Activated CD8-positive, alpha-beta T cell treated with anti-CD3 and anti-CD28 coated beads for 36 hours (primary cell): ENCODE measurements at regions of chr10 and their contacts with region 1.

Region 1: GRCh38 chr10:118720685-118721538 is 33.9 kb downstream of the CACUL1 start:
- DNase-seq: peak; percentile 75
- ATAC-seq: peak; percentile 42
- H3K4me3 Mint-ChIP-seq: no peak overlapping the region
- H3K27ac Mint-ChIP-seq: no peak overlapping the region
- H3K4me1 Mint-ChIP-seq: peaks cover 8% of the 10 kb centered on the region
- H3K27me3 Mint-ChIP-seq: no peaks in the 10 kb centered on the region
- CTCF ChIP-seq: peak; percentile 88

Region 2: GRCh38 chr10:118692872-118693271 is 28.0 kb before region 1 on chr10:
- CTCF ChIA-PET with region 1: interaction called, 16 read pairs
- POLR2A ChIA-PET with region 1: no interaction called
- intact Hi-C with region 1: no loop called
- DNase-seq: no peak
- ATAC-seq: no peak
- H3K4me3 Mint-ChIP-seq: no peak overlapping the region
- H3K27ac Mint-ChIP-seq: no peak overlapping the region
- H3K4me1 Mint-ChIP-seq: peaks cover 20% of the 10 kb centered on the region
- H3K27me3 Mint-ChIP-seq: no peaks in the 10 kb centered on the region
- CTCF ChIP-seq: no peak

Region 3: DNA sequence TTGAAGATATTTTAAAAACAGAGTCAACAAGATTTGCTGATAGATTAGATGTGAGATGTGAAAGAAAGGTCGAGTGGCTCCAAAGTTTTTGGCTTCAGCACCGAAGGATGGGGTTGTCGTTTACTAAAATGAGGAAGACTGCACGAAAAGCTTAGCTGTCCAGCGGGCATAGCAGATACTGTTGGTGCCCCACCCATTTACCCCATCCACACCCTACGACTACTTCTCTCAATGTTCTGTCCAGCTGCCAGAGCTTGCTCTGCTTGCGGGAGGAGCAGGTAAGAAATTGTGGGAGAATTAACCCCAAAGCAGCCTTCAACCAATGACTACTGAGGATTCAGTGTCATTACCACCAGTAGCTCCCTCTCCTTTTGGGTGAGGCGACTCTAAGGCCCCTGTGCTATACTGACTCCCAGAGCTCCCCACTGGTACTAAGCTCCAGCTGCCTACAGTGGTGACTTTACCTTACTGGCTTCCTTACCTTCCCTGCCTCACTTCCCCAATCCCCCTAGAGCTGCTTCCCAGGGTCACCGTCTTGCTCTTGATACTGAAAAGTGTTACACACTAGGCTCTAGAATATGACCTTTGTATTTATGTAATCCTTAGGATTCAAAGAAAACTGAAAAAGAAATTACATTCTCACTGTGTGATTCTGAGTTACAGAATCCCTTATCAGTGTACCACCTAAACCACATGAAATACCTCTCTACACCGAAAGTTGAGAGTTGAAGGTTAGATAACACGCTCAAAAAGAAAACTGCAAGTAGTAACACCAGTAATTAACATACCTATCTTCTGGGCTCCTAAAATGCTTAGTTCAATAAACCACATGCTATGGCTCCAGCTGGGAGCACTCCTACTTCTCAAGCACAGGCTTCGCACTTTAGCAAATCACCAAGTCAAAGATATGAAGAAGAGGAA is 11.6 kb after region 1 on chr10:
- CTCF ChIA-PET with region 1: interaction called, 14 read pairs
- POLR2A ChIA-PET with region 1: interaction called, 3 read pairs
- intact Hi-C with region 1: no loop called
- DNase-seq: no peak
- ATAC-seq: peak; percentile 74
- H3K4me3 Mint-ChIP-seq: peak overlapping the region; percentile 10
- H3K27ac Mint-ChIP-seq: peak overlapping the region; percentile 14
- H3K4me1 Mint-ChIP-seq: peaks cover 75% of the 10 kb centered on the region
- H3K27me3 Mint-ChIP-seq: no peaks in the 10 kb centered on the region
- CTCF ChIP-seq: no peak

Region 4: DNA sequence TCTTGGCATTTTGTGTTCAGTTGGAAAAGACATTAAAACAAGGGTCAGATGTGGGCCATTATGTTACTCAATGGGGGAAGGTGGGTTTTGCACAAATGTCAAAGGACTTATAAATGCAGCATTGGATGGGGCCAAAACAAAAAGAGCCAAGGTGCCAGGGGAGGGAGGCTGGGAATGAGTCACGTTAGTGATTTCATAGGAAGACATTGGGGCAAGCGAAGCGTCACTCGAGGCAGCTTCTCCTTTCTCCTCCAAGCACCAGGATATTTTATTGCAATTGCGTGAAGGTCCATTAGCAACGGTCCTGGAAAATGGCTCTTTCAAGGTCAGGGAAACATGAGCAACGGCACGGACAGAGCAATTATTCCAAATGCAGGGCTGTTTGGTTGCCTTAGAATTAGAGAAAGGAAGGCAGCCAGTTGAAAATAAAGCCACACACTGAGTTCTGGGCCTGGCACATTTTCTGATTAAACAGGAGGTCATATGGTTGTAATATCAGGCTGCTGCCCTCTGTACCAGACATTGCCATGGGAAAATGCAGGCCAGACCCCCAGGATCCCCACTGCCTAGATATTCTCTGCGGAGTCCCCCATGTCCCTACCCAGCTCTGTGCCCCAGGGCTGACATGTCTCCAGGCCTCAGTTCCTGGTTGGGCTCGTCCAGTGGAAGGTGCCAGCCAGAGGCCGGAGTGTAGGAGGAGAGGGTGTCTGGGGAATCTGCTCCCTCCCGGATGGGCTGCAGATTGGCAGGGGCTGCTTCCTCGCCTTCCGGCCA is 245.4 kb after region 1 on chr10:
- CTCF ChIA-PET with region 1: no interaction called
- POLR2A ChIA-PET with region 1: no interaction called
- intact Hi-C with region 1: no loop called
- DNase-seq: no peak
- ATAC-seq: no peak
- H3K4me3 Mint-ChIP-seq: no peak overlapping the region
- H3K27ac Mint-ChIP-seq: no peak overlapping the region
- H3K4me1 Mint-ChIP-seq: no peaks in the 10 kb centered on the region
- H3K27me3 Mint-ChIP-seq: peaks cover 6% of the 10 kb centered on the region
- CTCF ChIP-seq: no peak